SK-N-SH (cell line): ENCODE measurements at regions of chr3 and their contacts with region 1.

Region 1: GRCh38 chr3:52339612-52340011 is 23.5 kb downstream of the DNAH1 start:
- DNase-seq: peak; percentile 68
- H3K4me3 ChIP-seq: peak overlapping the region in 1 of 2 experiments; percentile 5; a peak in 1 of 4 replicates
- H3K27ac ChIP-seq: no peak overlapping the region
- H3K4me1 ChIP-seq: peaks cover 0 to 3% of the 10 kb centered on the region in 2 experiments; a peak in 1 of 4 replicates
- H3K27me3 ChIP-seq: no peaks in the 10 kb centered on the region
- CTCF ChIP-seq: peak; percentile 83
- EP300 ChIP-seq: no peak
- RAD21 ChIP-seq: peak; percentile 95

Region 2: GRCh38 chr3:52171514-52172261 is 167.9 kb before region 1 on chr3:
- CTCF ChIA-PET with region 1: no interaction called
- POLR2A ChIA-PET with region 1: no interaction called
- DNase-seq: no peak
- H3K4me3 ChIP-seq: no peak overlapping the region
- H3K27ac ChIP-seq: no peak overlapping the region
- H3K4me1 ChIP-seq: peaks cover 0 to 5% of the 10 kb centered on the region in 2 experiments; a peak in 1 of 4 replicates
- H3K27me3 ChIP-seq: no peaks in the 10 kb centered on the region
- CTCF ChIP-seq: 0 out of 2 replicates have a peak, but pooled peaks have one; percentile 14
- EP300 ChIP-seq: no peak
- RAD21 ChIP-seq: no peak

Region 3: DNA sequence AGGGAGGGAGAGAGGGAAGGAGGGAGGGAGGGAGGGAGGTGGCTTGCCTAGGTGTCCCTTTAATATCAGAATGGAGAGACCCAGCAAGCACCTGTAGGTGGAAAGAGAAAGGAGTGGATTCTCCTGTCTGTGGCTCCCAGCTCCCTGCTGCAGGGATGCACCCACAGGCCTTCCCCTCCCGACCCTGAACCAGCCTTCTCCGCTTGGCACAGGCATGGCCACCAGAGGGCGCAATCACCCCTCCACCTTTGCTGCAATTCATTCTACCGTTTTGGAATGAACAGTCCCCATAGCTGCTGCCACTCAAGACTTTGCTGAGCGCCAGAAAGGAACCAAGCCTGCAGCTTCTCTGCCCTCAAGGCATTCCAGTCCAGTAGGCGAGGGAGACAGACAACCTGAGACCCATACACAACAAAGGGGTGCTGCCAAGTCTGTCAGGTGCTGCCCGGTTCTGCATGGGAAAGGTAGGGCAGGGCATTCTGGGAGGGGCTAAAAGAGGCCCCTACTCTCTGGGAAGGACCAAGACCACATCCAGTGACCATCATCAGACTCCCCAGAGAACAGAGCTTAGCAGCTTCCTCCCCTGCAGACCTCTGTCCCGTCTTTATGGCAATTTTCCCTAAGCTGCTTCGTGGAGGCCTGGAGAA is 119.1 kb before region 1 on chr3:
- CTCF ChIA-PET with region 1: interaction called, 109 read pairs
- POLR2A ChIA-PET with region 1: no interaction called
- DNase-seq: peak; percentile 93
- H3K4me3 ChIP-seq: peak overlapping the region in 1 of 2 experiments; percentile 38; a peak in 1 of 4 replicates
- H3K27ac ChIP-seq: no peak overlapping the region
- H3K4me1 ChIP-seq: peaks cover 12 to 19% of the 10 kb centered on the region in 2 experiments; a peak in 3 of 4 replicates
- H3K27me3 ChIP-seq: no peaks in the 10 kb centered on the region
- CTCF ChIP-seq: peak; percentile 88
- EP300 ChIP-seq: no peak
- RAD21 ChIP-seq: peak; percentile 81

Region 4: DNA sequence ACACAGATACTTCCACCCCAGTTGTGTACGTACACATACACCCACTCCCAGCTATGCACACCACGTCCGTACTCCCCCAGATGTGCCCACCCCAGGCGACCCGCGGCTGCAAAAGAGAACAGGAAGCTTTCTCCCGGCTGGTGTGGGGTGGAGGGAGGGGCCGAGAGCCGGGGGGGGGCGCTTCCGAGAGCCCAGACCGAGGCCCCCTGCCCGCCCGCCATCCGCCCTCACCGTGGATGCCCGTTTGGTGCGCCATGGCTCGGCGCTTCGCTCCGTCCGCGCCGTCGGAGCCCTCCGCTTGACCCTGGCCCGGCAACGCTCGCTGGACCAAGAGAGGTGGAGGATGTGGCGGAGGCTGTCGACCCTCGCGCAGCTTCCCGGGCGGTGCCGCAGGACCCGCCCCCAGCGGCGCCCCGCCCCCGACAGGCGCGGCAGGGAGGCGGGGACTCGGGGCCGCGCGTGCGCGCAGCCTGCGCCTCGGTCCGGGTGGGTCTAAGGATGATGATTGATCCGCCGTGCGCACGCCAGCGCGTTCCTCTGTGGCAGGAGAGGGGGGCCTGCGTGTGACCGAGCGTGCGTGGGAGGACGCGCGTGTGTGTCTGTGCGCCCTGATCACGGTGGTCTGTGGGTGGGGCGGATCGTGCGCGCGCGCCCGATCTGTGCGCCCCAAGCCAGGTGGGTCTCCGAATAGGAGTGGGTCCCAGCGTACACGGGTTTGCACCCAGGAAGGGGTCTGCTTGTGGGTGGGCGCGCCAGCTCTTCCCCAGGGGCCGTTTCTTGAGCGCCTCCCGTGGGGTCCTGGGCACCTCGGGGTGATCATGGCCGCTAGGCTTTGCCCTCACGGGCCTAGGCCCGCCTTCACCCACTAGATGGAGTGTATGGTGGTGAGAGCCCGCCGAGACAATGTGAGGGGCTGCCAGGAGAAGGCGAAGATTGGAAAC is 100.6 kb before region 1 on chr3 and contains the start of gene TWF2:
- CTCF ChIA-PET with region 1: interaction called, 24 read pairs
- POLR2A ChIA-PET with region 1: no interaction called
- DNase-seq: peak; percentile 99
- H3K4me3 ChIP-seq: peak within 1 kb of the TSS; percentile 90 to 97
- H3K27ac ChIP-seq: peak within 1 kb of the TSS; percentile 93 to 96
- H3K4me1 ChIP-seq: peaks cover 8 to 49% of the 10 kb centered on the region in 2 experiments
- H3K27me3 ChIP-seq: no peaks in the 10 kb centered on the region
- CTCF ChIP-seq: peak; percentile 53
- EP300 ChIP-seq: no peak
- RAD21 ChIP-seq: no peak
- polyA plus RNA-seq, gene TWF2: 157 and 188 TPM in 2 replicates

Region 5: GRCh38 chr3:52291508-52292181 is 48.0 kb before region 1 on chr3:
- CTCF ChIA-PET with region 1: interaction called, 504 read pairs
- POLR2A ChIA-PET with region 1: interaction called, 5 read pairs
- DNase-seq: peak; percentile 80
- H3K4me3 ChIP-seq: no peak overlapping the region
- H3K27ac ChIP-seq: no peak overlapping the region
- H3K4me1 ChIP-seq: peaks cover 0 to 38% of the 10 kb centered on the region in 2 experiments; a peak in 2 of 4 replicates
- H3K27me3 ChIP-seq: no peaks in the 10 kb centered on the region
- CTCF ChIP-seq: peak; percentile 71
- EP300 ChIP-seq: no peak
- RAD21 ChIP-seq: peak; percentile 93

Region 6: DNA sequence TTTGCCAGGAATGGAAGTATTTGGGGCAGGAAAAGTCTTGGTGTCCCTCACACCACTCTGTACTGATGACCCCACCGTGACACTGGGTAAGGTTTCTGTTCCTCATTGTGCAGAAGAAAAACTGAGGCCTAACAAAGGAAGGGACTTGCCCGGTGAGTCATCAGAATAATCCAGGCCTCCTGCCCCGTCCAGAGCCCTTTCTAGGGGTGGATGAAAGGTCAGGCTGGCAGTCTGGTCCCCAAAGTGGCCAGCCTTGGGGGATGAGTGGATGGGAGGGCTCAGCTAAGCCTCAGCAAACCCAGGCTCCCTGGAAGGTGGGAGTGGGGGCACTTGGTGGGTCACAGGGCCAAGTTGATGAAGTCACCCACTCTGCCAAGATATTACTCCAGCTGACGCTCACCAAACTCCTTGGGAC is 25.8 kb before region 1 on chr3:
- CTCF ChIA-PET with region 1: interaction called, 21 read pairs
- POLR2A ChIA-PET with region 1: no interaction called
- DNase-seq: no peak
- H3K4me3 ChIP-seq: no peak overlapping the region
- H3K27ac ChIP-seq: peak overlapping the region; percentile 61 to 85
- H3K4me1 ChIP-seq: peaks cover 24 to 83% of the 10 kb centered on the region in 2 experiments
- H3K27me3 ChIP-seq: no peaks in the 10 kb centered on the region
- CTCF ChIP-seq: no peak
- EP300 ChIP-seq: no peak
- RAD21 ChIP-seq: no peak

Region 7: DNA sequence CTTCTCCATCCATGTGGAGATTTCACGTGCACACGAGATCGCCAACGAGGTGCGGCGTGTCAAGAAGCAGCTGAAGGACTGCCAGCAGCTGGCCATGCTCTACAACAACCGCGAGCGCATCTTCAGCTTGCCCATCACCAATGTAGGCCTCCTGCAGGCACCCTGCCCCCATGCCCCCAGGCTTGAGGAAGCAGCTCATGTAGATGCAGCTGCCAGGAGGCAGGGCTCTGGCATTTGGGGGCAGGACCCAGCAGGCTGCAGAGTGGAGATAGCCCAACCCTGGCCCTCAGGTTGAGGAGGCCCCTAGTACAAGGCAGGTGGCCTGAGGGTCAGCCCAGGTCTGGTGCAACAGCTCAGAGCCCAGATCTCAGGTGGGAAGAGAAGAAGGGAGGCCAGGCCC is 13.0 kb after region 1 on chr3:
- CTCF ChIA-PET with region 1: interaction called, 19 read pairs
- POLR2A ChIA-PET with region 1: no interaction called
- DNase-seq: no peak
- H3K4me3 ChIP-seq: no peak overlapping the region
- H3K27ac ChIP-seq: no peak overlapping the region
- H3K4me1 ChIP-seq: no peaks in the 10 kb centered on the region; a peak in 1 of 4 replicates
- H3K27me3 ChIP-seq: no peaks in the 10 kb centered on the region
- CTCF ChIP-seq: no peak
- EP300 ChIP-seq: no peak
- RAD21 ChIP-seq: no peak

Region 8: DNA sequence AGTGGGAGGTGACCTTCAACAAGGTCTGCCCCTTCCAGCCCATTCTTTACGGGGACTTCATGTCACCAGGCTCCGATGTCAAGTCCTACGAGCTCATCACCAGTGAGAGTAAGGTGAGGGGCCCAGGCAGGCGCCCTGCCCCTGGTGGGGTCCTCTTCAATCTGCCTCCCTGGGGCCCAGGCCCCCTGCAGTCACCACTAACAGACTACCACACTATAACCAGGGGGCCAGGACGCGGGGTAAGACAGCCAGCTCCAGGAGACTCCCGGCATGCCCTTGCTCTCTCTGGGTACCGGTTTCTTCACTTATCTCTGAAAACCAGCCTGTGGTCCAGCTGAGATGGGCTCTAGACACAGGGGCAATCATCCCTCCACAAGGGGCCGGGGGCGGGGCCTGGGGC is 40.4 kb after region 1 on chr3:
- CTCF ChIA-PET with region 1: interaction called, 11 read pairs
- POLR2A ChIA-PET with region 1: no interaction called
- DNase-seq: no peak
- H3K4me3 ChIP-seq: no peak overlapping the region
- H3K27ac ChIP-seq: no peak overlapping the region
- H3K4me1 ChIP-seq: no peaks in the 10 kb centered on the region; a peak in 1 of 4 replicates
- H3K27me3 ChIP-seq: no peaks in the 10 kb centered on the region
- CTCF ChIP-seq: no peak
- EP300 ChIP-seq: no peak
- RAD21 ChIP-seq: no peak